ENCODE measurements at regions of chr3 and their contacts with region 1.

Region 1: DNA sequence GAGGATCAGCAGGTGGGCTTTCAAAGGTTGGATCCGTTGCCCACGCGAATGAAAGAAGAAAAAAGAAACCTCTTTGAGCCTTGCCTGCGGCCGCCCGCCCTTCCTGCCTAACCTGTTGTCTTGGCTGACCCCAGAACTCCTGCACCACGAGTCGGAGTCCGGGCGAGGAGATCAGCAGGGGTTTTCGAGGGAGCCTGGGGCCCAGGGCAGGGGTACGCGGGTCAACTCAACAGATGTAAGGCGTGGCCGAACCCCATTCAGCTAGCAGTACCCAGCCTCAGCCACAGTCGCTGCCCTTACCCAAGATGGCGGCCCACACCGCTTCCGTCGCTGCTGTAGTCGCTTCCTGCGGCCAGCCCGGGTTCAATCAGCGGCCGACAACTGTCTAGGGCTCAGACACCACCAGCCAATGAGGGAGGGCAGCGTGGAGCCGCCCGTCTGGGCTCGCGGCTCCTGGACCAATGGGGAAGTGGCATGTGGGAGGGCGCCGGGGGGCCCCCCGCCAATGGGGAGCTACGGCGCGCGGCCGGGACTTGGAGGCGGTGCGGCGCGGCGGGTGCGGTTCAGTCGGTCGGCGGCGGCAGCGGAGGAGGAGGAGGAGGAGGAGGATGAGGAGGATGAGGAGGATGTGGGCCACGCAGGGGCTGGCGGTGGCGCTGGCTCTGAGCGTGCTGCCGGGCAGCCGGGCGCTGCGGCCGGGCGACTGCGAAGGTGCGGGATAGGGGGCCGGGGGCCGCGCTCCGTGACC is at the start of gene MANF:
- DNase-seq: peak; percentile 89
- ATAC-seq: peak; percentile 95
- H3K4me3 Mint-ChIP-seq: peak within 1 kb of the TSS; percentile 99
- H3K27ac Mint-ChIP-seq: peak within 1 kb of the TSS; percentile 98
- H3K4me1 Mint-ChIP-seq: peaks cover 49% of the 10 kb centered on the region
- H3K27me3 Mint-ChIP-seq: no peaks in the 10 kb centered on the region
- CTCF ChIP-seq: no peak
- total RNA-seq, gene MANF: 64.2 and 66.1 TPM in 2 replicates

Region 2: GRCh38 chr3:51580418-51580817 is 195.5 kb after region 1 on chr3:
- CTCF ChIA-PET with region 1: no interaction called
- POLR2A ChIA-PET with region 1: no interaction called
- intact Hi-C with region 1: no loop called
- DNase-seq: no peak
- ATAC-seq: no peak
- H3K4me3 Mint-ChIP-seq: no peak overlapping the region
- H3K27ac Mint-ChIP-seq: no peak overlapping the region
- H3K4me1 Mint-ChIP-seq: no peaks in the 10 kb centered on the region
- H3K27me3 Mint-ChIP-seq: no peaks in the 10 kb centered on the region
- CTCF ChIP-seq: no peak

Region 3: GRCh38 chr3:51670823-51671733 is 286.2 kb after region 1 on chr3 and contains the start of gene TEX264:
- CTCF ChIA-PET with region 1: interaction called, 3 read pairs
- POLR2A ChIA-PET with region 1: interaction called, 10 read pairs
- intact Hi-C with region 1: no loop called
- DNase-seq: peak; percentile 95
- ATAC-seq: peak; percentile 85
- H3K4me3 Mint-ChIP-seq: peak within 1 kb of the TSS; percentile 89
- H3K27ac Mint-ChIP-seq: peak within 1 kb of the TSS; percentile 89
- H3K4me1 Mint-ChIP-seq: peaks cover 55% of the 10 kb centered on the region
- H3K27me3 Mint-ChIP-seq: no peaks in the 10 kb centered on the region
- CTCF ChIP-seq: no peak
- total RNA-seq, gene TEX264: 24.1 and 24.4 TPM in 2 replicates

Measured in activated B cell treated with CpG ODN at 0.5 μM for 24 hours (primary cell).